BJ (cell line): ENCODE measurements at regions of chr10 and their contacts with region 1.

Region 1: DNA sequence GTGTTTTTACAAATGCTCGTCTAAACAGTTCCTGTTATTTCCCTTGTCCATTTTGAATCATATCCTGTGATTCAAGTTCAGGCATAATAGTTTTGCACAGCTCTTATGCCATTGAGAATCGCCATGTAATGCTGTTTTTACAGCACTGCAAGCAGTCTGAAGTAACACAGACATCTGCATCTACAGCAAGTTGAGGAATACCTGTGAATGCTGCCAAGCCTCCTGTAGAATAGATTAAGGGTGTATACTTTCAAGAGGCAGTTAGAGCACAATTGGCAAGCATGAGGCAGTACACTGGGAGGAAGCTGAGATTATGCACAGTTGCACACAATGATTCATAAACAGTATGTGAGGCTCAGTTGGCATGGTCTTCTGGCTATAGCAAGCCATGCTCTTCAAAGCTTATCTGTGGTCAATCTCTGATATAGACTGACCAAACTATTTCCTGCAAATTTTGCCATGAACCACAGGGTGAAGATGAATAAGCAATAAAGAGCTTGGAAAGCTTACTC is 121.9 kb upstream of the AKR1E2 start:
- DNase-seq: peak; percentile 60
- H3K4me3 ChIP-seq: no peak overlapping the region
- H3K27me3 ChIP-seq: no peaks in the 10 kb centered on the region
- CTCF ChIP-seq: no peak

Region 2: GRCh38 chr10:4057725-4058513 is 646.2 kb before region 1 on chr10:
- CTCF ChIA-PET with region 1: no interaction called
- POLR2A ChIA-PET with region 1: interaction called, 24 read pairs
- DNase-seq: no peak
- H3K4me3 ChIP-seq: no peak overlapping the region
- H3K27me3 ChIP-seq: no peaks in the 10 kb centered on the region
- CTCF ChIP-seq: no peak